ENCODE measurements at regions of chr22 and their contacts with region 1.

Region 1: GRCh38 chr22:20741634-20742581 is 32.0 kb upstream of the SERPIND1 start:
- DNase-seq: peak in 1 of 2 experiments; percentile 76
- H3K4me3 ChIP-seq: no peak overlapping the region
- H3K27ac ChIP-seq: no peak overlapping the region
- H3K4me1 ChIP-seq: no peaks in the 10 kb centered on the region
- H3K27me3 ChIP-seq: no peaks in the 10 kb centered on the region
- CTCF ChIP-seq: peak in 2 of 3 experiments; percentile 71 to 73; a peak in 3 of 4 replicates
- EP300 ChIP-seq: no peak
- POLR2A ChIP-seq: no peak
- RAD21 ChIP-seq: peak; percentile 76 to 79

Region 2: DNA sequence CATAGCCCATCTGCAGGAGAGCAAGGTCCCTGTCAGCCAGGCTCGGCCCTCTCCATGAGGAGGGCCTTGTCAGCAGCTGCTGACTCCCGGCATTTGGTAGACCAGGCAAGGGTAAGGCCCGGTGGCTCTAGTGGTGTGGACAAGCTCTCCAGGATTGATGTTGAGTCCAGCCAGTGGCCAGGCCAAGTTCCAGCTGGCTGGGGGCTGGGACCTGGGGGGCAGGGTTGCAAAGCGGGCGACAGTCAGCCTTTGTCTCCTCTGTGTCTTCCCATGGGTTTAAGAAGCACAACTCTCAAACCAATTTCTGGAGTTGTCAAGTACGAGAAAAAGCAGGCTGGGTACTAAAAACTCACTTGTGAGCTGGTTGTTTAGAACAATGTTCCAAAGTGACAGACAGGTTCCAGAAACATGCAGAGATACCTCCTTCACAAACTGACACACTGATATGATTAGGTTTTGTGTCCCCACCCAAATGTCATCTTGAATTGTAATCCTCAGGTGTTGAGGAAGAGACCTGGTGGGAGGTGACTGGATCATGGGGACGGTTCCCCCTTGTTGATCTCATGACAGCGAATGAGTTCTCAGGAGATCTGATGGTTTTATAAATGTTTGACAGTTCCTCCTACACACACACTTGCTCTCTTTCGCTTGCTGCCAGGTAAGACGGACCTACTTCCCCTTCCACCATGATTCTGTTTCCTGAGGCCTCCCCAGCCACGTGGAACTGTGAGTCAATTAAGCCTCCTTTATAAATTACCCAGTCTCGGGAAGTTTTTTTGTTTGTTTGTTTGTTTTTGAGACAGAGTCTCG is 20.3 kb before region 1 on chr22:
- CTCF ChIA-PET with region 1: interaction called, 14 read pairs
- POLR2A ChIA-PET with region 1: no interaction called
- DNase-seq: no peak
- H3K4me3 ChIP-seq: no peak overlapping the region
- H3K27ac ChIP-seq: no peak overlapping the region
- H3K4me1 ChIP-seq: no peaks in the 10 kb centered on the region
- H3K27me3 ChIP-seq: no peaks in the 10 kb centered on the region
- CTCF ChIP-seq: no peak
- EP300 ChIP-seq: no peak
- POLR2A ChIP-seq: no peak
- RAD21 ChIP-seq: no peak

Region 3: GRCh38 chr22:20729194-20729798 is 12.6 kb before region 1 on chr22:
- CTCF ChIA-PET with region 1: interaction called, 12 read pairs
- POLR2A ChIA-PET with region 1: no interaction called
- DNase-seq: no peak
- H3K4me3 ChIP-seq: no peak overlapping the region
- H3K27ac ChIP-seq: no peak overlapping the region
- H3K4me1 ChIP-seq: no peaks in the 10 kb centered on the region
- H3K27me3 ChIP-seq: no peaks in the 10 kb centered on the region
- CTCF ChIP-seq: peak in 2 of 3 experiments; percentile 35 to 50; a peak in 3 of 4 replicates
- EP300 ChIP-seq: no peak
- POLR2A ChIP-seq: no peak
- RAD21 ChIP-seq: no peak

Measured in H1 (cell line).